Activated CD4-positive, alpha-beta memory T cell treated with anti-CD3 and anti-CD28 coated beads for 36 hours (primary cell): ENCODE measurements at regions of chr12 and their contacts with region 1.

Region 1: DNA sequence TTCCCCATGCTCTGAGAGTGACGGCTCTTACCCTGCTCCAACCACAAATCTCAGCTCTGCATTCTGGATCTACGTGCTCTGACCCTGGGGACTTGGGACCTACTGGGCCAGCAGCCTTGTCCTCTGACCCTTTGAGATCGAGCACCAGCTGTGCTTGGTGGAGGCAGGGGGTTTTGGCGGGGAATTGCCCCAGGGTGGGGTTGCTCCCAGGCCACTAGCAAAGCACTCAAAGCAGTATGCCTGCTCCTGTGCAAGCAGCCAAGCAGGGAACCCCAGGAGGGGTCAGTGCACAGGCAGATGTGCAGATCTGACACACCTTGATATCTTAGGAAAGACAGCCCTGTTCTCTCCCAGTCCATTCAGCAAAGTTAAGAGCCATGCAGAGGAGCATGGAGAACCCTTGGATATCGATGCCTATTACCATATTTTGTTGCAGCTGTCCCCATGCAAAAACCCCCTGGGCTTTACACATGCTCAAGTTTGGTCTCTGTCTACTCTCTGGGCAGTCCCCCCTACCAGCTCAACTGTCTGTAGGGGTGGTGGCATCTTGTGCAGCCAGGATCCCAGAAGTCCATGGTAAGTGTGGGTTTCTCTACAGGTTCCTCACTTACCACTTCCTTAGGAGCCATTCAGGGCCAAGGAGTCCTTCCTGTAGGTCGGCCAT is 319.0 kb downstream of the TMTC2 start:
- DNase-seq: no peak
- H3K4me3 Mint-ChIP-seq: no peak overlapping the region
- H3K27ac Mint-ChIP-seq: no peak overlapping the region
- H3K4me1 Mint-ChIP-seq: no peaks in the 10 kb centered on the region
- H3K27me3 Mint-ChIP-seq: no peaks in the 10 kb centered on the region

Region 2: GRCh38 chr12:83389237-83389996 is 383.8 kb after region 1 on chr12:
- CTCF ChIA-PET with region 1: no interaction called
- POLR2A ChIA-PET with region 1: no interaction called
- intact Hi-C with region 1: loop called (anchors 5 kb)
- DNase-seq: peak; percentile 16
- H3K4me3 Mint-ChIP-seq: no peak overlapping the region
- H3K27ac Mint-ChIP-seq: no peak overlapping the region
- H3K4me1 Mint-ChIP-seq: no peaks in the 10 kb centered on the region
- H3K27me3 Mint-ChIP-seq: no peaks in the 10 kb centered on the region

Region 3: GRCh38 chr12:83823431-83823963 is 817.8 kb after region 1 on chr12:
- CTCF ChIA-PET with region 1: no interaction called
- POLR2A ChIA-PET with region 1: no interaction called
- intact Hi-C with region 1: loop called (anchors 10 kb)
- DNase-seq: peak; percentile 51
- H3K4me3 Mint-ChIP-seq: no peak overlapping the region
- H3K27ac Mint-ChIP-seq: no peak overlapping the region
- H3K4me1 Mint-ChIP-seq: no peaks in the 10 kb centered on the region
- H3K27me3 Mint-ChIP-seq: no peaks in the 10 kb centered on the region